B cell (primary cell): ENCODE measurements at regions of chr1 and their contacts with region 1.

Region 1: DNA sequence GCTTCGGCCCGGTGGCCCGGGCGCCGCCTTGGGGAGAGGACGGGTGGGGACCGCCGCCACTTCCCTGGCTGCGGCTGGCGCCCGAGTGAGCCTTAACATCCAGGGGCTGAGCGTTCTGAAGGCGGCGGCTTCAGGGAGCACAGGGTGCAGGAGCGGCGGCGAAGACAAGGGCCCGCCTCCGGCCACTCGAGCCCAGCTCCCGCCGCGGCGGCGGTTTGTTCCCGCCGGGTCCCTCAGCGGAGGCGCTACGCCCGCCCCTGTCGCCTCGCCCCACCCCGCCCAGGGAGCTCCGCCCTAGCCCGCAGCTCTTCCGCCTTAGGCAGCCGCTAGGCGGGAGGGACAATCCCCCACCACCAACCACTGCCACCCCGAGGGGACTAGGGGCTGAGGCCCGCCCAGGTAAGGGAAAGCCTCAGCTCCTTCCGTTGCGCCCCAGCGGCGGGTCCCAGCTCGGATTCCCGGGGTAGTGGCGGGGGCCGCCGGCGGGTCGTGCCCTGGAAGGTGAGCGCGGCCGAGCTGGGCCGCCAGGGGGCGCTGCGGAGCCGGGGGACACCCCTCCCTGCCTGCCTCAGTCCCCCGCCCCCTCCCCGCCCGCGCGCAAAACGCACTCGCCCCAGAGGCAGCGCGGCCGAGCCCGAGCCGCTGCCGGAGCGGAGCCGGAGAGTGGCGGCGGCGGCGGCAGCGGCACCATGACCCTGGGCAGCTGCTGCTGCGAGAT is at the start of gene FOXD2:
- DNase-seq: peak; percentile 95
- ATAC-seq: peak; percentile 89
- H3K4me3 ChIP-seq: peak within 1 kb of the TSS; percentile 34 to 83 (median 73)
- H3K4me3 Mint-ChIP-seq: peak within 1 kb of the TSS; percentile 90
- H3K27ac ChIP-seq: peak within 1 kb of the TSS in 1 of 2 donors; percentile 52
- H3K27ac Mint-ChIP-seq: peak within 1 kb of the TSS; percentile 81
- H3K4me1 ChIP-seq: peaks cover 36 to 41% of the 10 kb centered on the region in 2 donors
- H3K4me1 Mint-ChIP-seq: peaks cover 39% of the 10 kb centered on the region
- H3K27me3 ChIP-seq: peaks cover 4 to 78% (median 42%) of the 10 kb centered on the region in 4 experiments
- H3K27me3 Mint-ChIP-seq: peaks cover 29% of the 10 kb centered on the region
- CTCF ChIP-seq: peak; percentile 98
- total RNA-seq, gene FOXD2: 0.36 and 0.37 TPM in 2 replicates

Region 2: DNA sequence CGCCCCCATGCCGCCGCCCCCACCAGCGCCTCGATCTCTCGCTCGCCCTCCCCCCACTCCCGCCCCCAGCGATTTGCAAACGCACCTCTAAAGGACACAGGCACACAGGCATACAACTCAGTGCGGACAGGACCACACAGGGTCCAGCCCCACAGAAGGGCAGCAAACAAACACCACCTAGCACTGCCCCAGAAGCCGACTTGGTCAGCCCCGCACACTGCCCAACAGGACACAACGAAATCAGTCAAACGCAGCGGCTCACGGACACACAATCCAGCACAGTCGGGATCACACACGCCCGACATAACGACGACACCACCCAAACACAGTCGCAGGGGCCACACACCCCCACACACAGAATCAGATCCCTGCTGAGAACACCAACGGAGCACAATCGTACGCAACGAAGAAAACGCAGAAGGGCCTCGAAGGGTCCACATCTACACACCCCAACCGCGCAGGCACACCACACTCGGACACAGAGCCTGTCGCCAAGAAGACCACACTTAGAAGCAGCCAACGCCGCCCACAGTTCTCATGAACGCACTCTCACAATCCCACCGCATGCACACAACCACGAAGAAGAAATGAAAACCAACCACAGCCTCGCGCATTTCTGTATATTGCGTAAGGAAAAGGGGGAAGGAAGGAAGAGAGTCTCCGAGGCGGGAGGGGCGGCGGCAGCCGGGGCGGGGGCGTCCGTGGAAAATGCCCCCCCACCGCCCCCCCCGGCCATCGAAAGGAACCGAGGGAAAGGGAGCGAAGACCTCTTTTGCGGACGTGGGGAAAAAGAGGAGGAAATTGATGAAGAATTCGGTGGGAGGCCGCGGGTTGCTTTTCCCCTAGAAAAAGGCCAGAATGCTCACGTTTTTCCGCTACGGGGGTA is 206.1 kb before region 1 on chr1:
- CTCF ChIA-PET with region 1: interaction called, 3 read pairs
- POLR2A ChIA-PET with region 1: no interaction called
- intact Hi-C with region 1: loop called (anchors 2 kb)
- DNase-seq: peak; percentile 76
- ATAC-seq: peak; percentile 24
- H3K4me3 ChIP-seq: peak overlapping the region in 4 of 5 experiments; percentile 2 to 47 (median 38)
- H3K4me3 Mint-ChIP-seq: peak overlapping the region; percentile 83
- H3K27ac ChIP-seq: no peak overlapping the region
- H3K27ac Mint-ChIP-seq: peak overlapping the region; percentile 57
- H3K4me1 ChIP-seq: peaks cover 36 to 38% of the 10 kb centered on the region in 2 donors
- H3K4me1 Mint-ChIP-seq: peaks cover 32% of the 10 kb centered on the region
- H3K27me3 ChIP-seq: peaks cover 0 to 90% (median 64%) of the 10 kb centered on the region in 4 experiments
- H3K27me3 Mint-ChIP-seq: peaks cover 78% of the 10 kb centered on the region
- CTCF ChIP-seq: no peak

Region 3: GRCh38 chr1:47333922-47334764 is 103.5 kb before region 1 on chr1:
- CTCF ChIA-PET with region 1: interaction called, 10 read pairs
- POLR2A ChIA-PET with region 1: no interaction called
- intact Hi-C with region 1: loop called (anchors 1 kb)
- DNase-seq: peak; percentile 87
- ATAC-seq: peak; percentile 85
- H3K4me3 ChIP-seq: peak overlapping the region; percentile 59 to 97 (median 80)
- H3K4me3 Mint-ChIP-seq: peak overlapping the region; percentile 97
- H3K27ac ChIP-seq: peak overlapping the region; percentile 64 to 83
- H3K27ac Mint-ChIP-seq: peak overlapping the region; percentile 92
- H3K4me1 ChIP-seq: peaks cover 14 to 19% of the 10 kb centered on the region in 2 donors
- H3K4me1 Mint-ChIP-seq: peaks cover 17% of the 10 kb centered on the region
- H3K27me3 ChIP-seq: no peaks in the 10 kb centered on the region
- H3K27me3 Mint-ChIP-seq: no peaks in the 10 kb centered on the region
- CTCF ChIP-seq: no peak

Region 4: DNA sequence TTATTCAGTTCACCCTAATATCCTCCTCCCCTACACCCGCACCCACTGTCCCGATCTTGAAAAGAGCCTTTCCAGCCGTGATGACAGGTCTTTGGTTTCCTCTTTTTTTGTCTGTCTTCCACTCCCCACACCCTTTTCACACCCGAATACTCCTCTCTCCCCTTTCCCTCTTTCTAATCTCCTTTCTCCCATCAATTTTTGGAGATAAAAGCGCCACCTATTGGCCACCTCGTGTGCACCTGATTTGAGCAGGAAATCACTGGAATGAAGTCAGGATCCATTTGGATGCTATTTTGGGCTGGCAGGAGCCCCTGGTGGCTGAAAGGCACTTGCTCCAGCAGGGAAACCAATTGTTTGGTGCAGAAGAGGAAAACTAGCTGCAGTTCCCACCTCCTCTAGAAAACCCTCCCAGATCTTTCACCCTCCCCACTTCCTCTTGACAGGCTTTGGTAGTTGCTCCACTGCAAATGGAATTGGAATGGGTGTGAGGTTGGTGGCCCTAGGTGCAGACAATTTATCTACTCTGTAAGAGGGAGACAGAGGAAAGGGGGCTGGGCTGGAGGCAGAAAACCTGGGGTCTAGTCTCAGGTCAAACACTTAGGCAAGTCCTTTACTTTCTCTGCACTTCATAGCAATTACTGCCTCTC is 13.1 kb before region 1 on chr1:
- CTCF ChIA-PET with region 1: interaction called, 15 read pairs
- POLR2A ChIA-PET with region 1: no interaction called
- intact Hi-C with region 1: no loop called
- DNase-seq: no peak
- ATAC-seq: no peak
- H3K4me3 ChIP-seq: no peak overlapping the region
- H3K4me3 Mint-ChIP-seq: no peak overlapping the region
- H3K27ac ChIP-seq: no peak overlapping the region
- H3K27ac Mint-ChIP-seq: no peak overlapping the region
- H3K4me1 ChIP-seq: peaks cover 0 to 3% of the 10 kb centered on the region in 2 donors
- H3K4me1 Mint-ChIP-seq: no peaks in the 10 kb centered on the region
- H3K27me3 ChIP-seq: peaks cover 0 to 23% (median 9%) of the 10 kb centered on the region in 4 experiments
- H3K27me3 Mint-ChIP-seq: peaks cover 45% of the 10 kb centered on the region
- CTCF ChIP-seq: peak; percentile 54

Region 5: GRCh38 chr1:47449822-47450552 is 12.4 kb after region 1 on chr1:
- CTCF ChIA-PET with region 1: interaction called, 10 read pairs
- POLR2A ChIA-PET with region 1: interaction called, 4 read pairs
- intact Hi-C with region 1: loop called (anchors 2 kb)
- DNase-seq: no peak
- ATAC-seq: no peak
- H3K4me3 ChIP-seq: no peak overlapping the region
- H3K4me3 Mint-ChIP-seq: no peak overlapping the region
- H3K27ac ChIP-seq: no peak overlapping the region
- H3K27ac Mint-ChIP-seq: no peak overlapping the region
- H3K4me1 ChIP-seq: peaks cover 11 to 26% of the 10 kb centered on the region in 2 donors
- H3K4me1 Mint-ChIP-seq: peaks cover 3% of the 10 kb centered on the region
- H3K27me3 ChIP-seq: peaks cover 1 to 74% (median 52%) of the 10 kb centered on the region in 4 experiments
- H3K27me3 Mint-ChIP-seq: peaks cover 83% of the 10 kb centered on the region
- CTCF ChIP-seq: no peak

Region 6: GRCh38 chr1:47710329-47711071 is 272.9 kb after region 1 on chr1:
- CTCF ChIA-PET with region 1: interaction called, 24 read pairs
- POLR2A ChIA-PET with region 1: no interaction called
- intact Hi-C with region 1: no loop called
- DNase-seq: peak; percentile 64
- ATAC-seq: peak; percentile 65
- H3K4me3 ChIP-seq: peak overlapping the region in 1 of 5 experiments; percentile 38
- H3K4me3 Mint-ChIP-seq: peak overlapping the region; percentile 15
- H3K27ac ChIP-seq: no peak overlapping the region
- H3K27ac Mint-ChIP-seq: no peak overlapping the region
- H3K4me1 ChIP-seq: peaks cover 21 to 24% of the 10 kb centered on the region in 2 donors
- H3K4me1 Mint-ChIP-seq: peaks cover 17% of the 10 kb centered on the region
- H3K27me3 ChIP-seq: peaks cover 0 to 79% (median 32%) of the 10 kb centered on the region in 4 experiments
- H3K27me3 Mint-ChIP-seq: peaks cover 65% of the 10 kb centered on the region
- CTCF ChIP-seq: peak; percentile 88